CD8-positive, alpha-beta T cell (primary cell): ENCODE measurements at regions of chr11 and their contacts with region 1.

Region 1: DNA sequence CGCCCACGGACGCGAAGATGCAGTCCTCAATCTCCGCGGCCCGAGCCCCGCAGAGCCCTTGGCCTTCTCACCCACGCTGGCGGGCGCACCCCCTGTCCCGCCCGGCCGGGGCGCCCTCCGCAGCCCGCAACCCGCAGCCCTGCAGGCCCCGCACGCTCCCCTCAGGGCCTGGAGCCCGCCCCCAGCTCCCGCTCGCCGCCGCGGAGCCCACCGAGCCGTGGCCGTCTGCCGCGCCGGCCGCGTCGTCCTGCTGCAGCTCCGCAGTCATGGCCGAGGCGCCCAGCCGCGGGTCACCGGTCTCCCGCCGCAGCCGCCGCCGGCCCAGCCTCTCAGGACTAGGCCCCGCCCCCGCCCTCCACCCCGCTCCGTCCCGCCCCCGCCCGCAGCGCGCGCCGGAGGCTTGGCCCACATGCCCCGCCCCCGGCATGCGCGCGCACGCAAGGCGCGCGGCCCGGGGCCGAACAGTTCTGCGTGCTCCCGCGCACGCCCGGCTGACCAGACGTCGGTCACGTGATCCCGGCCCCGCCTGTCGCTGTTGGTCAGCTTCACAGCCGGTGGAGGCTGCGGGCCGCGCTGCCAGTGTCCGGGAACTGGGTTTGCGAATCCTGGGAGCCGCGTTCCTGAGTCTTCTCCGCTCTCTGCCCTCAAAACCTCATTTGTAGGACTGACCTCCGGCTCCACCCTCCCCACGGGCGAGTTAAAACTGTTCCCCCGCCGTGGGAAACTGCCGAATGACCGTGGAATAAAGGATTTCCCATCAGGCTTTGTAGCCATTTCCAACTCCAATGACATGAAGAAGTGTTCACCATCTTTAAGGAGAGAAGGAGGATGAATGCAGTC is at the start of gene USP28:
- DNase-seq: peak; percentile 45 to 90 (median 76)
- ATAC-seq: peak; percentile 85
- H3K4me3 ChIP-seq: peak within 1 kb of the TSS; percentile 80 to 95
- H3K4me3 Mint-ChIP-seq: peak within 1 kb of the TSS; percentile 96
- H3K27ac ChIP-seq: peak within 1 kb of the TSS; percentile 52 to 88
- H3K27ac Mint-ChIP-seq: peak within 1 kb of the TSS; percentile 97
- H3K4me1 ChIP-seq: peaks cover 11% of the 10 kb centered on the region
- H3K4me1 Mint-ChIP-seq: peaks cover 48% of the 10 kb centered on the region
- H3K27me3 ChIP-seq: no peaks in the 10 kb centered on the region
- H3K27me3 Mint-ChIP-seq: no peaks in the 10 kb centered on the region
- CTCF ChIP-seq: no peak
- total RNA-seq, gene USP28: 6.4 to 6.8 TPM

Region 2: GRCh38 chr11:113314389-113315301 is 560.8 kb before region 1 on chr11 and contains the start of gene TTC12:
- CTCF ChIA-PET with region 1: no interaction called
- POLR2A ChIA-PET with region 1: no interaction called
- intact Hi-C with region 1: loop called (anchors 1 to 10 kb)
- DNase-seq: peak; percentile 82 to 95 (median 90)
- ATAC-seq: peak; percentile 98
- H3K4me3 ChIP-seq: peak within 1 kb of the TSS; percentile 59 to 66
- H3K4me3 Mint-ChIP-seq: peak within 1 kb of the TSS; percentile 82
- H3K27ac ChIP-seq: peak within 1 kb of the TSS; percentile 81 to 87
- H3K27ac Mint-ChIP-seq: peak within 1 kb of the TSS; percentile 85
- H3K4me1 ChIP-seq: peaks cover 17% of the 10 kb centered on the region
- H3K4me1 Mint-ChIP-seq: peaks cover 30% of the 10 kb centered on the region
- H3K27me3 ChIP-seq: no peaks in the 10 kb centered on the region
- H3K27me3 Mint-ChIP-seq: no peaks in the 10 kb centered on the region
- CTCF ChIP-seq: no peak
- total RNA-seq, gene TTC12: 8.6 to 10.8 TPM

Region 3: DNA sequence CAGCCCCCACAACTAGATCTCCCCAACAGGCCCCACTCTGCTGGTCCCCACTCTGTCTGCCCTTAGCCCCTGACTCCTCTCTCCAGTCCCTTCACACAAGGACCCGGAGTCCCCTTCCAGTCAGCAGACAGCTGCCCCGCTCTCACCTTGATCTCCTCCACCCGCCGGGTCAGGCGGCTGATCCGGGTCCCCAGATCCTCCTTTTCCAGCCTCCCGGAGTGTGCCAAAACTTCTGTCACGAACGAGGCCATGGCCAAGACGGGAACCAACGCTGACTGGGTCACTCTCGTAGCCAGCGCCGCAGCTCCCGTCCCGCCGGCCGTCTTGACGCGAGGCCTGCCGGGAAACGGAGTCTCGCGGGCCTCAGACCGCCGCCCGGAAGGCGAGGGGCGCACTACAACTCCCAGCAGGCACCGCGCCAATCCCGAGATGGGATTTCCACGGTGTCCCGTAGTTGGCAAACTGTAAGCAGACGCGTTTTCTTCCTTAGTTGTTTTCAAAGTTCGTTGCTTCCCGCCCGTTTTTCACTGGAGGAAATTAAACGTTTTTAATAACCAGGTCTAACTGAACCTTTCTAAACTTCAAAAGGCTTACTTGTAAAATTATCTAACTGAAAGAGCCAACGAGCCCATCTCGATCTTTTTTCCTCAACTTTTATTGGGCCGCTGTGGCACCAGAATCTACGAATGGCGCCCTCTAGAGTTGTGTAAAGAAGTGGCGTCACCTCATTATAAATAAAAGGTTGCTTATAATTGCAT is 101.9 kb before region 1 on chr11 and contains the start of gene ZW10:
- CTCF ChIA-PET with region 1: no interaction called
- POLR2A ChIA-PET with region 1: no interaction called
- intact Hi-C with region 1: loop called (anchors 1 kb)
- DNase-seq: peak; percentile 79 to 96 (median 91)
- ATAC-seq: peak; percentile 98
- H3K4me3 ChIP-seq: peak within 1 kb of the TSS; percentile 89 to 90
- H3K4me3 Mint-ChIP-seq: peak within 1 kb of the TSS; percentile 99
- H3K27ac ChIP-seq: peak within 1 kb of the TSS; percentile 59 to 73
- H3K27ac Mint-ChIP-seq: peak within 1 kb of the TSS; percentile 89
- H3K4me1 ChIP-seq: peaks cover 3% of the 10 kb centered on the region
- H3K4me1 Mint-ChIP-seq: peaks cover 28% of the 10 kb centered on the region
- H3K27me3 ChIP-seq: no peaks in the 10 kb centered on the region
- H3K27me3 Mint-ChIP-seq: no peaks in the 10 kb centered on the region
- CTCF ChIP-seq: peak; percentile 96
- total RNA-seq, gene ZW10: 2.6 to 2.8 TPM

Region 4: DNA sequence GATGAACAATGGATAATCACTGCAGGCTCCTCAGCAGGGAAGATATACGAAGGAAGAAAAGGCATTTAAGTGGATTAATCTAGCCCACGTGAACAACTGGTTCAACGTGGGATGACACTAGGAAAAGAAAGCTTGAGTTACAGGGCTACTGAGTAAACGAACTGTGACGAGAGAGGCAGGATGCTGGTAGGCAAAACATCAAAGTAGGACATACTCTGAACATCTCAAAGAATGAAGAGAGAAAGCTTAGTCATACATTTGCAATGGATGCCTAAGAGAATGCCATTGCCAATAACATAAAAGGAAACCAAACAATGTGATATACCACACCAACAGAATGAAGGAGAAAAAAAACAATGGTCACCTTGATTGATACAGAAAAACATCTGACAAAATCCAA is 13.0 kb before region 1 on chr11:
- CTCF ChIA-PET with region 1: interaction called, 5 read pairs
- POLR2A ChIA-PET with region 1: interaction called, 10 read pairs
- intact Hi-C with region 1: no loop called
- DNase-seq: peak in 1 of 9 experiments; percentile 46
- ATAC-seq: peak; percentile 54
- H3K4me3 ChIP-seq: no peak overlapping the region
- H3K4me3 Mint-ChIP-seq: no peak overlapping the region
- H3K27ac ChIP-seq: peak overlapping the region in 1 of 2 experiments; percentile 61
- H3K27ac Mint-ChIP-seq: peak overlapping the region; percentile 43
- H3K4me1 ChIP-seq: peaks cover 17% of the 10 kb centered on the region
- H3K4me1 Mint-ChIP-seq: peaks cover 33% of the 10 kb centered on the region
- H3K27me3 ChIP-seq: no peaks in the 10 kb centered on the region
- H3K27me3 Mint-ChIP-seq: no peaks in the 10 kb centered on the region
- CTCF ChIP-seq: no peak

Region 5: GRCh38 chr11:114439229-114440120 is 564.0 kb after region 1 on chr11 and contains the start of gene REXO2:
- CTCF ChIA-PET with region 1: no interaction called
- POLR2A ChIA-PET with region 1: no interaction called
- intact Hi-C with region 1: loop called (anchors 1 to 10 kb)
- DNase-seq: peak; percentile 86 to 98 (median 94)
- ATAC-seq: peak; percentile 99
- H3K4me3 ChIP-seq: peak within 1 kb of the TSS; percentile 86 to 99
- H3K4me3 Mint-ChIP-seq: peak within 1 kb of the TSS; percentile 98
- H3K27ac ChIP-seq: peak within 1 kb of the TSS; percentile 58 to 66
- H3K27ac Mint-ChIP-seq: peak within 1 kb of the TSS; percentile 91
- H3K4me1 ChIP-seq: peaks cover 16% of the 10 kb centered on the region
- H3K4me1 Mint-ChIP-seq: peaks cover 30% of the 10 kb centered on the region
- H3K27me3 ChIP-seq: no peaks in the 10 kb centered on the region
- H3K27me3 Mint-ChIP-seq: no peaks in the 10 kb centered on the region
- CTCF ChIP-seq: no peak
- total RNA-seq, gene REXO2: 18.8 to 19.9 TPM